HepG2 (cell line): ENCODE measurements at regions of chr17 and their contacts with region 1.

Region 1: DNA sequence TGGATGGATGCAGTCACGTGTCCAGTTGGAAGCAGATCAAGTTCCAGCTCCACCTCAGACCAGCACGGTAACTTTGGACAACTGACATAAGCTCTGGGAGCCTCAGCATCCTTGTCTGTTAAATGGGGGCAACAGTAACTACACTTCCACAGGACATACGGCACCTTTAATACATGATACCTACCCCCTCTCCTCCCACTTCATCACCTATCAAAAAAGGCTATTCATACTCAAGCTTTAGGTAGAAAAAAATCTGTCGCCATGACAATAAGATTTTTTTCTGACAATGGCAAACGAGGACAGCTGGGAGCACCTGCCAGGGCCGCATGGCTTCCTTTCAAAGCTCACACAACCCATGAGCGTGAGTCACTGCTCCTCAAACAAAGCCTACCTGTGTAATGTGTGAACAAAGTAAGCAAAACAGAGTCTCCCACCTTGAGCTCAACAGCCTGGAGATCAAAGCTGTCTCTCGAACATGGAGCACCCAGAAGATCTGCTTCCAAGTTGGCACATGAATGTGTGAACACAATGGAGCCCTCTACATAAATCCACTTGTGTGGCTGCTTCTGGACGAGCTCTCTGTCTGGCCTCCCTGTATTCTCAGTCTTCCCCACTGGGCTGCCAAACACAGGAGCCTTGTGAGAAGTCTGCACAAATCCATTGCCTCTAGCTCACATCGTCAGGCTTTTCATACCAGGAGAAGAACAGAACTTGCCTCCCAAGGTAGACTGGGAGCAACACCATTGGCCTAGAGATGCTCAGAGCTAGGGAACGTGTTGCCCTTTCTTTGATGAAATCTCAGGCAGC is 459.7 kb downstream of the SOX9 start:
- DNase-seq: peak; percentile 100
- ATAC-seq: peak; percentile 92
- H3K4me3 ChIP-seq: peak overlapping the region in 1 of 3 experiments; percentile 20; a peak in 1 of 6 replicates
- H3K27ac ChIP-seq: peak overlapping the region; percentile 80
- H3K4me1 ChIP-seq: peaks cover 73% of the 10 kb centered on the region
- H3K27me3 ChIP-seq: no peaks in the 10 kb centered on the region
- CTCF ChIP-seq: no peak
- EP300 ChIP-seq: peak; percentile 95 to 97
- POLR2A ChIP-seq: peak in 1 of 2 experiments; percentile 30; a peak in 2 of 4 replicates
- RAD21 ChIP-seq: 0 out of 2 replicates have a peak, but pooled peaks have one; percentile 6

Region 2: GRCh38 chr17:72569148-72569946 is 11.2 kb before region 1 on chr17:
- CTCF ChIA-PET with region 1: no interaction called
- POLR2A ChIA-PET with region 1: interaction called, 16 read pairs
- in situ Hi-C with region 1: no loop called
- intact Hi-C with region 1: loop called (anchors 1 kb)
- DNase-seq: peak; percentile 70
- ATAC-seq: peak; percentile 68
- H3K4me3 ChIP-seq: peak overlapping the region in 1 of 3 experiments; percentile 47; a peak in 2 of 6 replicates
- H3K27ac ChIP-seq: peak overlapping the region; percentile 37
- H3K4me1 ChIP-seq: peaks cover 95% of the 10 kb centered on the region
- H3K27me3 ChIP-seq: no peaks in the 10 kb centered on the region
- CTCF ChIP-seq: peak; percentile 57
- EP300 ChIP-seq: no peak
- POLR2A ChIP-seq: no peak
- RAD21 ChIP-seq: 0 out of 2 replicates have a peak, but pooled peaks have one; percentile 14

Region 3: DNA sequence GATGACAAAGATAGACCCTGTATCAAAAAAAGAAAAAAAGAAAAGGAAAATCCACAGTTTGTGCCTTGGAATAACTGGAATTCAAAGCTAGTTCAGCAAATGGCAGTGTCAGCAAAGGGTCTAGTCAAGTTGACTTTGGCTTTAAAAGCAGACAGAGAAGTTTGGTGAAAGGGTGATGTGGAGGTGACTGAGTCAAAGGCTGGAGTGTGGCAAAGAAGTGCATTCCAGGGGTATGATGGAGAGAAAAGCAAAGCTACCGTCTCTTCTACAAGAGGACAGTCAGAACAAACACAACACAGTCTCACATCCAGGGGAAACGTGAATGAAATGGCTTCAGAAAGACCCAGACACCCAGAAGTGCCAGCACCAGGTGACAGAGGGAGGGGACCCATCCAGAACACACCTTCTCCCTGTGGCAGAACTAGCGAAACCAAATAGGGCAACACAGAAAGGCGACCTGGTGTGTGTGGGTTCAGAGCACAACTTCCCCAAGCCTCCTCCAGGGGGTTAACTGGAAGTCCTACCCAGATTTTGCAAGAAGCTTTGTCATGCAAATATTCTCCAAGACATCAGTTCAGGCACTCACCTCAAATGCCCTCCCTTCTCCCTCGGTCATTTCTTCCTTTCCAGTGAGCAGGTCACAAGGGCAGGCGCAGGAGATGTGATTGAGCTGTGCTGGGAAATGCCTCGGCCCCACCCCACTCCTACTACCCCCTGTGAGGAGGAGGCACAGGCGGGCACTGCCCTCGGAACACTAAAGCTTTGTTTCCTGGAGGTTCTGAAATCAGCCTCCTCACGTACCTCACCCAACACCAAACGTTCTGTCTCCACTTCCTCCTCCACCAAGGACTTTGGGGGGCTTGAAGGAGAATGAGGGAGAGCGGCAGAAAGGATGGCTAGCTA is 22.2 kb after region 1 on chr17:
- CTCF ChIA-PET with region 1: no interaction called
- POLR2A ChIA-PET with region 1: interaction called, 24 read pairs
- in situ Hi-C with region 1: no loop called
- intact Hi-C with region 1: no loop called
- DNase-seq: no peak
- ATAC-seq: peak; percentile 70
- H3K4me3 ChIP-seq: peak overlapping the region; percentile 9 to 52 (median 11)
- H3K27ac ChIP-seq: no peak overlapping the region
- H3K4me1 ChIP-seq: peaks cover 54% of the 10 kb centered on the region
- H3K27me3 ChIP-seq: no peaks in the 10 kb centered on the region
- CTCF ChIP-seq: no peak
- EP300 ChIP-seq: no peak
- POLR2A ChIP-seq: no peak
- RAD21 ChIP-seq: no peak

Region 4: DNA sequence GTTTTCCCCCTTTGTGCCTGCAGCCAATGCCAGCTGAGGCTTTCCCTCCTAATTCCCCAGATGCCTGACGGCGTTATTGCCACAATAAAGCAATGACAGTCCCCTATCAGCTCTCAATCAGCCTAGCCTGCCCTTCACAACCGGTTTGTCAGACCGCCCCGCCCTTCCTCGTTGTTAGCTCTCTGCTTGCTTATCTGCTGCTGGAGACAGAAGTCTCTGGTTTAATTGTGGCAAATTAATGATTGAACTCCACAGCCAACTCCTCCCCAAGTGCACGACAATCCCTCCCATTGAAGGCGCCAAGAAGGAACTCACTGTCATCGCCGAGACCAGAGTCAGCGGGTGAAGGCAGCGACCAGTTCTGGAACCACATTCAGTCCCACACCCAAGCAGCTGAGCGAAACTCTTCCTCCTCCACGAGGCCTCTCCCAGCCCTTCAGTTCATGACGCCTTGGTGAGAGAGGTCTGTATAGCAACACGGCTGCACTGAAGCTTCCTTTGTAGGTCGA is 37.5 kb after region 1 on chr17:
- CTCF ChIA-PET with region 1: no interaction called
- POLR2A ChIA-PET with region 1: interaction called, 15 read pairs
- in situ Hi-C with region 1: no loop called
- intact Hi-C with region 1: no loop called
- DNase-seq: peak; percentile 92
- ATAC-seq: peak; percentile 70
- H3K4me3 ChIP-seq: peak overlapping the region; percentile 33 to 64 (median 40); a peak in 5 of 6 replicates
- H3K27ac ChIP-seq: no peak overlapping the region
- H3K4me1 ChIP-seq: peaks cover 71% of the 10 kb centered on the region
- H3K27me3 ChIP-seq: no peaks in the 10 kb centered on the region
- CTCF ChIP-seq: no peak
- EP300 ChIP-seq: peak in 1 of 2 experiments; percentile 65; a peak in 2 of 4 replicates
- POLR2A ChIP-seq: peak in 1 of 2 experiments; percentile 20; a peak in 1 of 4 replicates
- RAD21 ChIP-seq: no peak